H1 (cell line): ENCODE measurements at regions of chr16 and their contacts with region 1.

Region 1: GRCh38 chr16:12257926-12258561 is 281.5 kb downstream of the SNX29 start:
- DNase-seq: no peak
- H3K4me3 ChIP-seq: no peak overlapping the region
- H3K27ac ChIP-seq: no peak overlapping the region
- H3K4me1 ChIP-seq: no peaks in the 10 kb centered on the region
- H3K27me3 ChIP-seq: no peaks in the 10 kb centered on the region
- CTCF ChIP-seq: peak; percentile 36 to 47 (median 43)
- EP300 ChIP-seq: no peak
- POLR2A ChIP-seq: no peak
- RAD21 ChIP-seq: peak; percentile 40 to 51

Region 2: GRCh38 chr16:12215277-12216105 is 42.6 kb before region 1 on chr16:
- CTCF ChIA-PET with region 1: interaction called, 13 read pairs
- POLR2A ChIA-PET with region 1: no interaction called
- DNase-seq: peak; percentile 27 to 67
- H3K4me3 ChIP-seq: no peak overlapping the region
- H3K27ac ChIP-seq: no peak overlapping the region
- H3K4me1 ChIP-seq: peaks cover 4 to 13% (median 9%) of the 10 kb centered on the region in 4 experiments; a peak in 6 of 7 replicates
- H3K27me3 ChIP-seq: no peaks in the 10 kb centered on the region
- CTCF ChIP-seq: peak; percentile 78 to 90 (median 87)
- EP300 ChIP-seq: no peak
- POLR2A ChIP-seq: no peak
- RAD21 ChIP-seq: peak; percentile 86 to 88

Region 3: GRCh38 chr16:12271006-12271405 is 13.0 kb after region 1 on chr16:
- CTCF ChIA-PET with region 1: interaction called, 29 read pairs
- POLR2A ChIA-PET with region 1: no interaction called
- DNase-seq: peak; percentile 31 to 54
- H3K4me3 ChIP-seq: no peak overlapping the region
- H3K27ac ChIP-seq: no peak overlapping the region
- H3K4me1 ChIP-seq: no peaks in the 10 kb centered on the region
- H3K27me3 ChIP-seq: no peaks in the 10 kb centered on the region
- CTCF ChIP-seq: peak; percentile 72 to 81 (median 78)
- EP300 ChIP-seq: no peak
- POLR2A ChIP-seq: no peak
- RAD21 ChIP-seq: peak; percentile 72 to 84

Region 4: DNA sequence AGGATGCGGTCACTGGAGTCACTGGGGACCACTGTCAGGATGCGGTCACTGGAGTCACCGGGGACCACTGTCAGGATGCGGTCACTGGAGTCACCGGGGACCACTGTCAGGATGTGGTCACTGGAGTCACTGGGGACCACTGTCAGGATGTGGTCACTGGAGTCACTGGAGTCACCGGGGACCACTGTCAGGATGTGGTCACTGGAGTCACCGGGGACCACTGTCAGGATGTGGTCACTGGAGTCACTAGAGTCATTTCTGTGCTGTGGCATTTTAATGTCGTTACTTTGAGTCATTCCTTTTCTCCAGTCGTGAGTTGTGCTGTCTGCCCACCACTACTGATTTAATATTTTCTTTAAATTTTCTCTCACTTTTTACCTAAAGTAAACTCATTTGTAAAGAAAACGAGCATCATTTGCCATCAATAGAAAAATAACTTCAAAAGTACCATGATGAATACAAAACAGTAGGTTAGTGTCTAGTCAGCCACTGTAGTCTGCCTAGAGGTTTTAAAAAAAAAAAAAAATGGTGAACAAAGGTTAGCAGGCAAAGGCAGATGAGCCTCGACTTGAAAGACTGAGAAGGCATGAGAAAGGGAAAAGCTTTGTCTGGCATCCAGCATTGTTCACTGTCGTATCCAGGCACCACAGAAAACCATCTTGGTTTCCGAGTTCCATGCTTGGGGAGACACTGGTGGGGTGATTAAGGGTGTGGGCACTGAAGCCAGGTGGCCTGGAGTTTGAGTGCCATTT is 65.1 kb after region 1 on chr16:
- CTCF ChIA-PET with region 1: no interaction called
- POLR2A ChIA-PET with region 1: no interaction called
- DNase-seq: no peak
- H3K4me3 ChIP-seq: no peak overlapping the region
- H3K27ac ChIP-seq: no peak overlapping the region
- H3K4me1 ChIP-seq: peaks cover 2 to 6% (median 5%) of the 10 kb centered on the region in 4 experiments; a peak in 4 of 7 replicates
- H3K27me3 ChIP-seq: no peaks in the 10 kb centered on the region
- CTCF ChIP-seq: no peak
- EP300 ChIP-seq: no peak
- POLR2A ChIP-seq: no peak
- RAD21 ChIP-seq: no peak

Region 5: GRCh38 chr16:12375046-12375740 is 117.1 kb after region 1 on chr16:
- CTCF ChIA-PET with region 1: no interaction called
- POLR2A ChIA-PET with region 1: no interaction called
- DNase-seq: no peak
- H3K4me3 ChIP-seq: no peak overlapping the region
- H3K27ac ChIP-seq: no peak overlapping the region
- H3K4me1 ChIP-seq: no peaks in the 10 kb centered on the region
- H3K27me3 ChIP-seq: no peaks in the 10 kb centered on the region
- CTCF ChIP-seq: no peak
- EP300 ChIP-seq: no peak
- POLR2A ChIP-seq: no peak
- RAD21 ChIP-seq: no peak